ENCODE measurements at regions of chr6 and their contacts with region 1.

Region 1: DNA sequence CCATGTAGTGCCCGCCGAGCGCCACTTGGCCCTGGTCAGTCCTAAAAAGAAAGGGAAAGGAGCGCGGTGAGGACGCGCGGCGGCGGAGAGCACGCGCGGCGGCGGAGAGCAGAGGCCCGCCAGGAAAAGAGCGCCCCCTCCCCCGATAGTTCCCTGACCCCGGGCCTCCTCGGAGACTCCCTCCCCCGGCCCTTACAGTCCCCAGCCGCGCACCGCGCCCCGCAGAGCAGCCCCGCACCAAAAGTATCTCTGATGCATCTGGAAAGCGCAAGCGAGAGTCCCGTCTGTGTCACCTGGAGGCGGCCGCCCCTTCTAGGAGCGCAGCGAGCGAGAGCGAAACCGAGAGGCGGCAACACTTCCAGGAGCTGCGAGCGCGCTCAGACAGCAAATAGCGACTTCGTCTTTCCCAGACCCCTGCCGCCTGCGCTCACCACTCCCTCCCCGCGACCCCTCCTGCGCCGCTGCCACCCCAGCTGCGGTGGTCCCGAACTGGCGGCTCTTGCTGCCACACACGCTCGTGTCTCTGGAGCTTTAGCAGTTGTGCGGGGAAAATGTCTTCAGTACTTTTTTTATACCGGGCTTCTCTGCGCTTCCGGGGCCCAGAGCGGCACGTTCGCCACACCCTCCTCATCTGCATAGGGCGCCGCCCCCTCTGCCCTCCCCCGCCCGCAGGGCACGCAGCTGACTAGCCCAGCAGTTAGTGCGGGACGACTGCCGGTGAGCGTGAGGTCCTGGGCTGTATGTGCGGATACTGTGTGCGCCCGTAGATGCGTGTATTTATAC is at the start of gene TENT5A:
- DNase-seq: peak; percentile 94 to 96 (median 96)
- ATAC-seq: peak; percentile 83 to 85 (median 84)
- H3K4me3 ChIP-seq: peak within 1 kb of the TSS; percentile 77 to 95 (median 86)
- H3K27ac ChIP-seq: peak within 1 kb of the TSS; percentile 93 to 99 (median 97)
- H3K4me1 ChIP-seq: peaks cover 0 to 36% (median 13%) of the 10 kb centered on the region in 12 donors
- H3K27me3 ChIP-seq: no peaks in the 10 kb centered on the region
- CTCF ChIP-seq: peak in 3 of 12 donors; percentile 22 to 37 (median 35)
- POLR2A ChIP-seq: peak; percentile 30 to 97
- total RNA-seq, gene TENT5A: 25.7 to 47.2 (median 41.4) TPM

Region 2: GRCh38 chr6:80214436-80215022 is 1537.8 kb before region 1 on chr6:
- intact Hi-C with region 1: loop called in 4 of 10 experiments (anchors 5 to 10 kb)
- DNase-seq: peak in 1 of 5 donors; percentile 31
- ATAC-seq: peak in 3 of 4 donors; percentile 75 to 83 (median 77)
- H3K4me3 ChIP-seq: no peak overlapping the region
- H3K27ac ChIP-seq: peak overlapping the region in 1 of 12 donors; percentile 7
- H3K4me1 ChIP-seq: peaks cover 0 to 31% (median 8%) of the 10 kb centered on the region in 12 donors
- H3K27me3 ChIP-seq: no peaks in the 10 kb centered on the region
- CTCF ChIP-seq: peak; percentile 52 to 85 (median 72)
- POLR2A ChIP-seq: no peak

Region 3: DNA sequence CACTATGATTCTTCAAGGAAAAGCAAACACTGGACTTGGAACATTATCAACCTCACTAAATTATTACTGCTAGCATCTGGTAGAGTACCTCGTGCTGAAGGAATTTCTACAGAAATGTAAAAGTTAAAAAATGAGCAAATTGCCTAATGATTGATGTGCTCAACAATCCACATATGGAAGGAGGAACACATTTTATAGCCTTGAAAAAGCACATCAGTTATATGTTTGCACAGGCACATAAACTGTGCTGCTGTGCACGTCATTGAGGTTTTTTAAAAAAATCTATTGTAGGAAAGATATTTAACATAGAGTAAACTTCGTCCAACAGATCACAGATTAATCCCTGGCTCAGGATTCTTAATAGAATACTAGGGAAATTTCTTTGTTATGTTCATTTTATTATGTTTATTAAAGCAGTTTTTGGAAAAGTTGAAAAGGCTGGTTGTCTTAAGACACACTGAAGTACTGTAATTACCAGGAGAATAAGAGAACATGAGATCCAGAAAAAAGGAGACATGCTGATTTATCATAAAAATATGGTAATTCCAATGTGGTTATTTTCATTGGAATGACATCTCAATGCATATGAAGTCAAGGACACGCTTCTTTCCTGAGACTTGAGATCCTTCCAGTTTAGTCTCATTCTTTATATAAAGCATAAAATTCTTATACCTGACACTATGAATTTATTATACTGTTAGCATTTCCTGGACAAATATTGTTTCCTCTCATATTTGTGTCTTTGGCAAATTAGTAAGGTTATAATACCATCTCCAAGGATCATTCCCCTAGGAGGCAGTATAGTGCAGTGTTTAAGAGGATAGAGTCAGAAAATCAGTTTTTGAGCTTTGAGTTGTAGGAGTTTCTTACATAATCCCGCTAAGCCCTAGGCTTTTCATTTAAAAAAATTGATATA is 510.9 kb before region 1 on chr6:
- intact Hi-C with region 1: loop called in 8 of 10 experiments (anchors 2 to 10 kb)
- DNase-seq: no peak
- ATAC-seq: peak in 2 of 4 donors; percentile 45 to 55
- H3K4me3 ChIP-seq: no peak overlapping the region
- H3K27ac ChIP-seq: no peak overlapping the region
- H3K4me1 ChIP-seq: no peaks in the 10 kb centered on the region
- H3K27me3 ChIP-seq: no peaks in the 10 kb centered on the region
- CTCF ChIP-seq: peak in 11 of 12 donors; percentile 22 to 60 (median 42)
- POLR2A ChIP-seq: no peak

Region 4: DNA sequence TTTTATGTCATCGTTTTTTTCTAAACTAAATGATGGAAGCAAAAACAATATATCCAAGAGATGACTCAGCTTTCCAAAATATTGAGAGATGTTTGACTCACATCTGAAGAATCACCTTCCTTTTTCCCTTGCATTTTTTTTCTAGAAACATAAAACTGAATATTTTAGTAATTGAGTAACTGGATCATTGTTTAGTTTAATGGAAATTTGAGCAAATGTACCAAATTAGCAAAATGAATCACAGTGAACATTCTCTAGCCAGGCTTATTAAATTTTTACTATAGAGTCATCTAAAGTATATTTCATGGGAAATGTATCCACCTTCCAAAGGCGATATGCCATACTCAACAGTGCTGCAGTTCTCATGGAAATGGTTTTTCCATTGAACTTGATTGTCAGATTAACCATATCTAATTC is 145.4 kb before region 1 on chr6:
- intact Hi-C with region 1: loop called in 1 of 10 experiments (anchors 10 kb)
- DNase-seq: no peak
- ATAC-seq: no peak
- H3K4me3 ChIP-seq: no peak overlapping the region
- H3K27ac ChIP-seq: no peak overlapping the region
- H3K4me1 ChIP-seq: peaks cover 0 to 4% (median 0%) of the 10 kb centered on the region in 12 donors
- H3K27me3 ChIP-seq: no peaks in the 10 kb centered on the region
- CTCF ChIP-seq: no peak
- POLR2A ChIP-seq: no peak

Region 5: GRCh38 chr6:81894788-81895271 is 142.5 kb after region 1 on chr6:
- intact Hi-C with region 1: loop called in 6 of 10 experiments (anchors 1 to 5 kb)
- DNase-seq: peak; percentile 59 to 86 (median 70)
- ATAC-seq: peak; percentile 91 to 97 (median 92)
- H3K4me3 ChIP-seq: peak overlapping the region in 7 of 12 donors; percentile 9 to 44 (median 22)
- H3K27ac ChIP-seq: peak overlapping the region; percentile 50 to 87 (median 80)
- H3K4me1 ChIP-seq: peaks cover 0 to 55% (median 13%) of the 10 kb centered on the region in 12 donors
- H3K27me3 ChIP-seq: no peaks in the 10 kb centered on the region
- CTCF ChIP-seq: no peak
- POLR2A ChIP-seq: no peak

Region 6: GRCh38 chr6:82033631-82034211 is 281.4 kb after region 1 on chr6:
- intact Hi-C with region 1: loop called in 3 of 10 experiments (anchors 5 to 10 kb)
- DNase-seq: peak in 4 of 5 donors; percentile 68 to 81 (median 78)
- ATAC-seq: peak; percentile 84 to 91 (median 86)
- H3K4me3 ChIP-seq: no peak overlapping the region
- H3K27ac ChIP-seq: peak overlapping the region in 8 of 12 donors; percentile 12 to 82 (median 54)
- H3K4me1 ChIP-seq: peaks cover 0 to 30% (median 2%) of the 10 kb centered on the region in 12 donors
- H3K27me3 ChIP-seq: no peaks in the 10 kb centered on the region
- CTCF ChIP-seq: no peak
- POLR2A ChIP-seq: no peak